GM12878 (cell line): ENCODE measurements at regions of chrX and their contacts with region 1.

Region 1: GRCh38 chrX:47193475-47194193 is at the start of gene UBA1:
- DNase-seq: peak; percentile 97
- ATAC-seq: peak; percentile 84
- H3K4me3 ChIP-seq: peak within 1 kb of the TSS; percentile 91
- H3K27ac ChIP-seq: peak within 1 kb of the TSS; percentile 89
- H3K4me1 ChIP-seq: peaks cover 13% of the 10 kb centered on the region
- H3K27me3 ChIP-seq: no peaks in the 10 kb centered on the region
- CTCF ChIP-seq: peak; percentile 68 to 90 (median 79); a peak in 5 of 6 replicates
- EP300 ChIP-seq: 0 out of 4 replicates have a peak, but pooled peaks of 1 of the 2 experiments have one; percentile 29
- POLR2A ChIP-seq: peak; percentile 98
- RAD21 ChIP-seq: peak; percentile 92
- polyA plus RNA-seq, gene UBA1: 60.4 to 79.9 TPM

Region 2: DNA sequence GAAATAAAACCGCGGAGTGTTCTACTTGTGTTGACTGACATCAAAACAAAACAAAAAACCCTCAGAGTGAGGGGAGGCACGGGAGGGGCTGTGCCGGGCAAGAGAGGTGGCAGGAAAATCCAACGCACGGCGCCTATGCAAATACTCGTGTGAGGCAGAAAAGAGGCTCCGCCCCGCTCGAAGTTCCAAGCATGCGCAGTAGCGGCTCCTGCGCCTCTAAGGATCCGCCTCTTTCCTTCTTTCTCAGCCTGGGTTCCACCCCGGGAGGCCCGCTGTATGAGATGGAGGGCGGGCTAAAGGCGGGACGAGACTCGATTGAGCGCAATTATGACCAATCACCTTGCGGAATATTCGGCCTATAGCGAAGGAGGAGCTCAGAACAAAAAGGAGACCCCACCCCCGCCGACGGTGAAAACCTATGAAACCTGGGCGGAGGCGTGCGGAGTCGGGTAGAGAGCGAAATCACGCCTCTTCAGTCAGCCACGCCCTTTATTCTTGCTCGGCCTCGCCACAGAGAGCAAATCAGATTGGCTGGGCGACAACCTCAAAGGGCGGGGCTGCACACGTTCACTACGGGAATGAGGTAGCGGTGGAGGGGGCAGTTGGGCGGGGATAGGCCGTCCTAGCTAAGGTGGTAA is 24.1 kb after region 1 on chrX:
- CTCF ChIA-PET with region 1: interaction called, 6 read pairs
- POLR2A ChIA-PET with region 1: interaction called, 25 read pairs
- RAD21 ChIA-PET with region 1: interaction called, 8 read pairs
- SMC1A ChIA-PET with region 1: interaction called, 4 read pairs
- in situ Hi-C with region 1: no loop called
- intact Hi-C with region 1: loop called (anchors 2 kb)
- DNase-seq: peak; percentile 99
- ATAC-seq: peak; percentile 90
- H3K4me3 ChIP-seq: peak overlapping the region; percentile 88; the same call in 1 of the 2 replicates
- H3K27ac ChIP-seq: peak overlapping the region; percentile 96
- H3K4me1 ChIP-seq: peaks cover 8% of the 10 kb centered on the region; the same call in 1 of the 2 replicates
- H3K27me3 ChIP-seq: no peaks in the 10 kb centered on the region
- CTCF ChIP-seq: no peak
- EP300 ChIP-seq: no peak
- POLR2A ChIP-seq: no peak; the same call in 1 of the 2 replicates
- RAD21 ChIP-seq: no peak

Region 3: GRCh38 chrX:47361538-47362511 is 168.2 kb after region 1 on chrX:
- CTCF ChIA-PET with region 1: interaction called, 4 read pairs
- POLR2A ChIA-PET with region 1: interaction called, 3 read pairs
- RAD21 ChIA-PET with region 1: interaction called, 5 read pairs
- SMC1A ChIA-PET with region 1: no interaction called
- in situ Hi-C with region 1: no loop called
- intact Hi-C with region 1: loop called (anchors 5 kb)
- DNase-seq: peak; percentile 96
- ATAC-seq: peak; percentile 89
- H3K4me3 ChIP-seq: peak overlapping the region; percentile 69
- H3K27ac ChIP-seq: peak overlapping the region; percentile 45
- H3K4me1 ChIP-seq: no peaks in the 10 kb centered on the region
- H3K27me3 ChIP-seq: no peaks in the 10 kb centered on the region
- CTCF ChIP-seq: peak; percentile 9 to 43 (median 29); a peak in 3 of 6 replicates
- EP300 ChIP-seq: no peak
- POLR2A ChIP-seq: no peak
- RAD21 ChIP-seq: peak; percentile 42; the same call in 1 of the 2 replicates

Region 4: DNA sequence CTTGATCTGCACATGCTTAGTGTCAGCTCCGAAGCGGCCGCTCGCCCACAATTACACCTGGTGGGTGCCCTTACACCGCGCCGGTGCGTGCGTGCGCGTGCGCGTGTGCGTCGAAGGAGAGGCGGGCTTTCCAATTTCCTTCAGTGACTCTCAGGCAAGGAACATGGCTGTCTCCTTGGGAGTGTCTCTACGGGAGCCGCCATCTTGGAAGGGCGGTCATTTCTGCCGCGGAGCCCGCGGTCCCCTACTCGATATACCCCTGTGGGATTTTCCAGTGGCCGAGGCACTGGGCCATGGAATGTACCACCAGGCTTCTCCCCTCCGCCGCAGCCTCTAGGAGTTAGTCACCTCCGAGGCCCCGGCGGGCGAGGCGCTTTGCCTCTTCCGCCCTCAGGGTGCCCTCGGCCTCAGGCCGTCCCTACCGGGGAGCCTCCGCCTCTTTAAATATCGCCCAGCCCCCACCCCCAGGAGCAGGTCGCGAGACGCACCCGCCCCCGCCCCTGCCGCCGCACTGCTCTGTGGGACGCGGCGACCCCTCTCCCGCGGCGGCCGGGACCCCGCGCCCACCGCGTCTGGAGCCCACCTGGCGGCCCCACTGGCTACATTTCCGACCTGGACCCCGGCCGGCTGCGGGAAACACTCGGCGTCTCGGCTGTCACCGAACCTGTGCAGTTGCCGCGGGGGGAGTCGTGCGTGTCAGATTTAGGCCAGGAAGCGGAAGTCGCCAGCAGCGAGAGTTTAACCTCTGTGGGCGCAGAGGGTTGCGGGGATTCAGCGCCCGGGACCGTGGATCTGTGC is 289.1 kb after region 1 on chrX and contains the start of gene ZNF41:
- CTCF ChIA-PET with region 1: no interaction called
- POLR2A ChIA-PET with region 1: interaction called, 4 read pairs
- RAD21 ChIA-PET with region 1: no interaction called
- SMC1A ChIA-PET with region 1: no interaction called
- in situ Hi-C with region 1: no loop called
- intact Hi-C with region 1: loop called (anchors 1 kb)
- DNase-seq: peak; percentile 64
- ATAC-seq: peak; percentile 94
- H3K4me3 ChIP-seq: peak within 1 kb of the TSS; percentile 66
- H3K27ac ChIP-seq: peak within 1 kb of the TSS; percentile 88
- H3K4me1 ChIP-seq: no peaks in the 10 kb centered on the region; the same call in 1 of the 2 replicates
- H3K27me3 ChIP-seq: no peaks in the 10 kb centered on the region
- CTCF ChIP-seq: no peak
- EP300 ChIP-seq: no peak
- POLR2A ChIP-seq: peak; percentile 74
- RAD21 ChIP-seq: no peak
- polyA plus RNA-seq, gene ZNF41: 0.95 to 1.2 TPM

Region 5: GRCh38 chrX:47644557-47645091 is 451.0 kb after region 1 on chrX:
- CTCF ChIA-PET with region 1: no interaction called
- POLR2A ChIA-PET with region 1: no interaction called
- RAD21 ChIA-PET with region 1: no interaction called
- SMC1A ChIA-PET with region 1: no interaction called
- in situ Hi-C with region 1: no loop called
- intact Hi-C with region 1: loop called (anchors 2 kb)
- DNase-seq: no peak
- ATAC-seq: peak; percentile 90
- H3K4me3 ChIP-seq: no peak overlapping the region
- H3K27ac ChIP-seq: no peak overlapping the region
- H3K4me1 ChIP-seq: no peaks in the 10 kb centered on the region; the same call in 1 of the 2 replicates
- H3K27me3 ChIP-seq: no peaks in the 10 kb centered on the region
- CTCF ChIP-seq: peak; percentile 39 to 59 (median 51); a peak in 4 of 6 replicates
- EP300 ChIP-seq: no peak
- POLR2A ChIP-seq: no peak
- RAD21 ChIP-seq: peak; percentile 19; the same call in 1 of the 2 replicates

Region 6: GRCh38 chrX:47751670-47752069 is 558.0 kb after region 1 on chrX:
- CTCF ChIA-PET with region 1: no interaction called
- POLR2A ChIA-PET with region 1: no interaction called
- RAD21 ChIA-PET with region 1: no interaction called
- SMC1A ChIA-PET with region 1: no interaction called
- in situ Hi-C with region 1: no loop called
- intact Hi-C with region 1: loop called (anchors 5 kb)
- DNase-seq: no peak
- ATAC-seq: peak; percentile 79
- H3K4me3 ChIP-seq: no peak overlapping the region
- H3K27ac ChIP-seq: no peak overlapping the region
- H3K4me1 ChIP-seq: no peaks in the 10 kb centered on the region
- H3K27me3 ChIP-seq: no peaks in the 10 kb centered on the region
- CTCF ChIP-seq: peak; percentile 36 to 49 (median 48); a peak in 4 of 6 replicates
- EP300 ChIP-seq: no peak
- POLR2A ChIP-seq: no peak
- RAD21 ChIP-seq: peak; percentile 59